ENCODE measurements at regions of chr15 and their contacts with region 1.

Region 1: GRCh38 chr15:92714477-92715401 is 59.2 kb upstream of the FAM174B start:
- DNase-seq: peak; percentile 56 to 94 (median 80)

Region 2: GRCh38 chr15:92097474-92098178 is 617.1 kb before region 1 on chr15:
- intact Hi-C with region 1: loop called (anchors 2 kb)
- DNase-seq: peak in 7 of 10 donors; percentile 34 to 89 (median 58)

Region 3: DNA sequence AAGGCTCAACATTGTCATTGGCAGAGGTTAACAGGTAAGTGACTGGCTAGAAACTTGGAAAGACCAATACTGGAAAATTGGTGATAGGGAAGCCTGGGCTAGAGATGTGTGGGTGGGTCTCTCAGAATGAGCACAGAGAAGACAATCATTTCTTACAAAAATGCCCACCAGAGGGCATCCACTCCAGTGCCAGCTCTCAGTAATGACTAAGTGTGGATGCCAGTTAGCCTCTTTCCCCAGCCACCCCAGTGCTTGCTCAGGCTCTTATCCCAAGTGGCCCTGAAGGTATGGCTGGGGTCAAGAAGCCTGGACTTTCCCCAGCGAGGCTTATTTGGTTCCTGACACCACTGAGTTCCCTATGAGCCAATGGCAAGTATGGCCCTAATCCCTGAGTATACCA is 437.0 kb before region 1 on chr15:
- intact Hi-C with region 1: loop called (anchors 10 kb)
- DNase-seq: peak in 4 of 10 donors; percentile 3 to 17 (median 9)

Region 4: DNA sequence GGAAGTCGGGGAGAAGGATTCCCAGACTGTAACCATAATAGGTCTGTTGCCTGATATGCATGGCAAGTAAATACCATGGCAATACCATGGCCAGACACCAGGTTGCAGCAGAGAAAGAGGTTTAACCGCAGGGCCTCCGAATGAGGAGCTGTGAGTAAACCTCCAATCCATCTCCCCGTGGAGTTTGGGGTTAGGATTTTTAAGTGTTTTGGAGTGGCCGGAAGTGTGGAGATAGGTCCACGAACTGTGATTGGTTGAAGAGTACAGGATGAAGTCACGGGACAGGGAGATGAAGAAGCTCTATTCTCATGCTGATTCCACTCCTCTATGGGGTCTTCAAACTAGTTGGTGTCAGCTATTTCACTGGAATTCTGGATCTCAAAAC is 193.1 kb before region 1 on chr15:
- intact Hi-C with region 1: loop called (anchors 1 kb)
- DNase-seq: peak; percentile 35 to 95 (median 79)

Region 5: DNA sequence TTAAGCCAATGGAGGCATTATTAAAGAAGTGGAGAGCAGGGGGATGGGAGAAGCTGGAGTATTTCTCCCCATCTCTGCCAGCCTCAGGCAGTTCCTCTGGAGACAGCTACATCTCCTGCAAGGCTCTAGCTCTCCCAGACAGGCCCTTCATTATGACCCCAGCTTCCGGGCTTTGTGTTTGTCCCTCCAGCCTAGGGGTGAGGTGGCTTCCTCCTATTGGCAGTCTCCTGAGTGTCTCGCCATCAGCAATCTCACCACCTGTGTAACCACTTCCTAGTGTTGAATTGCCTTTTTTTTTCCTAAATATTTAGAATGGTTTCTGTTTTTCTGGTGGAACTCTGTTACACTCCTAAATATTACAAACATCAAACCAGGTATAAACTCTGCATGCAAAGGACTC is 181.4 kb before region 1 on chr15:
- intact Hi-C with region 1: no loop called
- DNase-seq: no peak

Region 6: DNA sequence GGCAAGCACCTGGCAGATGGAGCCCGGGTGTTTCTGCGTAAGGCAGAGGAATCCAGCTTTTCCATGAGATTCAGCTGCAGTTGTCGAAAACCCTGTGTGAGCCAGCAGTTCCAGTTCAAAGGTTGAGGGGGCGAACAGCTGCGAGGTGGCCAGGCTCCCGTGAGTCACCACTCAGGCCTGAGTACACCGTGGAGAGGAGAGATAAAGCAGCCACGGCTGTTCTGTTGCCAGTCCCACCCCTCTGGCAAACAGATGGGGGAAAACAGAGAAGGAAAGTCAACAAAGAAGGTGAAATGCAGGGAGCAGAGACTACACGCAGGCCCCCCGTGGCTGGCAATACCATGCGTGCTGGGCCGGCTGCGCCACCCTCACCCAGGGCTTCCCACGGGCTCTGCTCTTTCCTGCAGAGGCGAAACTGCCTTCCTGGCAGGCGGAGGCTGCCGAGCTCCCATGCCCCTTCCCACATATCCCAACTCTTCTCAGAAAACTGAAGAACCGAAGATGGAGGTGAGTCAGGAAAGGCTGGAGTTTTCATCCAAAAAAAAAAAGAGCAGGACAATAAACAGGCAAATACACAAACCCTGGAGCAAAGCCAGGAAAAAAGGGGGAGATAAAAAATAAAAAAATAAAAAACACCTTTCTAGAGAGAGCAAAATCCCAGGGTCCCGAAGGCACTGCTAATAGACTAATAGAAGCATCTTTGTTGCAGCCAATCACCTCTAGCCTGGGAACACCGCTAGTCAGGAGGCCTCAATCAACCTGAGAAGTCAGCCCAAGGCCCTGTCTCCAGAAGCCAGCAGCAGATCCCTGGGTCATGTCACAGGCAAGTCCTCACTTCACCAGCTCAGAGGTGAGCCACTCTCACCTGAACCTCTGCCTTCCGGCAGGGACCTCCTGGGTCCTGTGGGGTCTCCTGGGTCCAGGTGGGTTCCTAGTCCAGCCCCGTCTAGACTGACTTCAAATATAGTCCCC is 96.9 kb before region 1 on chr15:
- intact Hi-C with region 1: loop called (anchors 10 kb)
- DNase-seq: peak in 2 of 10 donors; percentile 30 to 84

Measured in posterior cingulate gyrus (tissue), 11 donors.